Activated naive CD8-positive, alpha-beta T cell treated with anti-CD3 and anti-CD28 coated beads, Interleukin-2, amount 10 ng/mL, durations not matched to agents 7 days and 5 days (primary cell): ENCODE measurements at regions of chr14 and their contacts with region 1.

Region 1: DNA sequence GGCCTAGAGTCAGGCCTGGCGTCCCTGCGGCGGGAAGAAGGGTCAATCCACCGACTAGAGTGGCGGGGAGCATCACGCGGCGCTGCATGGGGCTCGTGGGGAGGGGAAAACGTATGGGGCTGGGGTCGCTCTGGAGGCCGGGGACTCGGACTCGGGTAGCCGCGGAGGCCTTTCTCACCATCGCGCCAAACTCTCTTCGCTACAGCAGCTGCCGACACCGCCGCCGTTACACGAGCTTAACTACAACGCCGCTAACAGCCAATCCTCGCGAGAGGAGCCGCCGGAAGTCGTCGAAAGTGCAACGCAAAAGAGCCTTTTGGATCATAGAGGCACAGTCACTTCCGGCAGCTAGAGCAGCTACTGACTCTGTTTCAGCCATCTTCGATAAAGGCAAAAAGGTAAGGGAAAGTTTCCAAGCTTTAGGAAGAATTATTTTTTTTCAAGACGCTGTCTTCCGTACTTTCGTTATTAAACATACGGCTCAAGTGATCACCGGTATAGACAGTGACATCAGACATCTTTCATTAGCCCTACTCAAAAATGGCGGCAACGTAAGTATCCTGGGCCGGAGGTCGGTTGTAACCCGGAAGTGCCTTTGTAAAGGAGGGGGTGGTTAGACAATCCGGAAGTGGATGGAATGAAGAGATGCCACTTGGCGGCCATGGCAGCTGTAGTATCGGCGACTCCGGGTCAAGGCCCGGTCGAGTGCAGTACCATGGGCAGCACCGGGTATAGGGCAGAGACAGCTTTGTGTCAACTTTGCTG is at the starts of genes ERH and SLC39A9:
- DNase-seq: peak; percentile 89
- ATAC-seq: peak; percentile 84
- H3K4me3 Mint-ChIP-seq: peak within 1 kb of the TSS; percentile 99
- H3K27ac Mint-ChIP-seq: peak within 1 kb of the TSS; percentile 100
- H3K4me1 Mint-ChIP-seq: peaks cover 53% of the 10 kb centered on the region
- H3K27me3 Mint-ChIP-seq: no peaks in the 10 kb centered on the region
- total RNA-seq, gene ERH: 226 to 233 TPM
- total RNA-seq, gene SLC39A9: 39.8 to 40.5 TPM

Region 2: DNA sequence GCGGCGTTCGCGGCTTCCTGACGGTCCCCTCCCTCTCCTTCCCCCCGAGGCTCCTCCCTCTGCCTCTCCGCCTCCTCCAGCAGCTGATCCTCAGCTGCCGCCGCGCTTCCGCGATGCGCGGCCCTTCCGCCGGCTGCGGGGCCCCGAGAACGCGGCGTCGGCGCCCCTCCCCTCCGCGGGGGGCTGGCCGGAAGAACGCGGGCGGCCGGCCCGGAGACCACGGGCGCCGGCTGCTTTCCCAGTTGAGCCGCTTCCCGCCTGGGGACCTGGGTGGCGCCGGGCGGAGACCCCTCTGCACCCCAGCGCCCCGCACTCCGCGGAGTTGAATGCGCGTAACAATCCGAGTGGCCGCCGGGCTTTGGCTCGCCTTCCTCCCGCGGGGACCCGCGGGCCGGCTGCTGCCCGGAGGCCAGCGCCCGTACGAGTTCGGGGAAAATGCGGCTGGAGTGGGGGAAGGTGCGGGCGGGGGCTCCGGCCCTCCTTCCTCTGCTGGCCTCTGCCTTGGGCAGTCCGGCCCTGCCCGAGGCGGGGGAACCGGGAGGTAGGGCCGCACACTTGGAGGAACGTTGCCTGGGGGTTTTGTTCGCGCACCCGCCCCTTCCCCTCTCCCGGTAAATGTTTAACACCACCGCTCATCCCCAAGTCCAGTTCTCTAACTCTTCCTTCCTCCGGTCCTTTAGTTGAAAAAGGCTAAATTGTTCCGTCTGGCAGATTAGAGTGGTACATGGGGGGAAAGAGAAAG is 244.9 kb before region 1 on chr14:
- POLR2A ChIA-PET with region 1: interaction called, 17 read pairs
- DNase-seq: peak; percentile 87
- ATAC-seq: peak; percentile 95
- H3K4me3 Mint-ChIP-seq: peak overlapping the region; percentile 97
- H3K27ac Mint-ChIP-seq: peak overlapping the region; percentile 89
- H3K4me1 Mint-ChIP-seq: peaks cover 26% of the 10 kb centered on the region
- H3K27me3 Mint-ChIP-seq: peaks cover 34% of the 10 kb centered on the region

Region 3: DNA sequence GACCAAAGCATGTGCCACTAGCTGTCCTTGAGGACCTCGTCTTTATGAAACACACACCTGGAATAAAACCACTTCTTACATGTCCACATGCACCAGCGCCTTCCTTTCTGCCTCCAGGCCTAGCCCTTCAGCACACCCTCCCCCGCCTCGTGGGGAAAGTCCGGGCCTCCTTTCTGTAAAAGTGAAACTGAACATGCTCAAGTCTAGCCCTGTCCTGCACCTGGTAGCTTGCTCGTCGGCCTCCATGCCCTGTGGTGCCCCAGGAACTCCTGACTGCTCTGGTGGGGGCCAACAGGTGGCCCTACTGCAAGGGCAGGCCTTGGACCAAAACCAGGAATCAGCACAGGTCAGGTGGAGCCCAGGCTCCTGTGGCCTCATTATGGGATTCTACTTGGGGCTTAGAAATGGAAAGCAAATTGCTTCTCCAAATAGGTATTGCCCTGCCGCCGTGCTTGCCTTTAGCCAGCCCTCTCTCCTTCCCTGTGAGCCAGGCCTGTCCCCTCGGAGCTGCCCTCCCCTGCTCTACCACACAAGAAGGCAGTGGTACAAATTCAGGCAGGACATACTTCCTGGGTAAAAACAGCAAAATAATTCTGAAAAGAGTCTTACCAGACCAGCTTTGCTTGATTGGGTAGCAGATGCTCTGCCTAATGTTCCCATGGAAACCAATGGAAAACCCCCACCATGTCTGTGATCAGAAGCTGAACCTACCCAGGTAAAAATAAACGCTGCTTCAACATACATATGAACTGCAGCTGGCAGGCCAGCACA is 43.7 kb before region 1 on chr14:
- POLR2A ChIA-PET with region 1: interaction called, 10 read pairs
- DNase-seq: peak; percentile 68
- ATAC-seq: peak; percentile 88
- H3K4me3 Mint-ChIP-seq: peak overlapping the region; percentile 26
- H3K27ac Mint-ChIP-seq: peak overlapping the region; percentile 91
- H3K4me1 Mint-ChIP-seq: peaks cover 17% of the 10 kb centered on the region
- H3K27me3 Mint-ChIP-seq: peaks cover 2% of the 10 kb centered on the region